Activated CD8-positive, alpha-beta memory T cell treated with anti-CD3 and anti-CD28 coated beads, Interleukin-2, amount 10 ng/mL, durations not matched to agents 7 days and 5 days (primary cell): ENCODE measurements at regions of chr20 and their contacts with region 1.

Region 1: DNA sequence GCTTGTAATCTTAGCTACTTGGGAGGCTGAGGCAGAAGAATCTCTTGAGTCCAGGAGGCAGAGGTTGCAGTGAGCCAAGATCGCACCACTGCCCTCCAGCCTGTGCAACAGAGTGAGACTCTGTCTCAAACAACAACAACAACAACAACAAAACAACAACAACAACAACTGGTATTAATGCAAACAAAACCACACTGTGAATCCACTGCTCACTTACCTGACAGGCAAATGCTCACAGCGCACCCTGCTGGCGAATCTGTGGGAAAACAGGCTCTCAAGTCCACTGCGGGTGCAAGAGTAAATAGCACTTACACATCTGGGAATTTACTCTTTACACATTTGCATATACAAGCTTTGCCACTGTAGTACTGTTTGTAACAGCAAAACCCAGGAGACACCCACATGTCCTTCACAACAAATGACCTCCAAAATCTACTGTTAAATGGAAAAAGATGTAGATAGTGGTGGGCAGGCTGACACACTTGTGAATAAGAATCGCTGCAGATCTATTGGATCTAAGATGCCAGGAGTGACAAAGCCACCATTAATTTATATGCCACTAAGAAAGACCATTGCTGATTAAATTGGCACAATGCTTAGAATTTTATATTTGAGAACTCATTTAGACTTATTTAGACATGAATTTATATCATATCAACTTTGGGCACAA is 29.3 kb downstream of the NSFL1C start:
- DNase-seq: peak; percentile 85
- ATAC-seq: peak; percentile 63
- H3K4me3 Mint-ChIP-seq: no peak overlapping the region
- H3K27ac Mint-ChIP-seq: no peak overlapping the region
- H3K4me1 Mint-ChIP-seq: peaks cover 28% of the 10 kb centered on the region
- H3K27me3 Mint-ChIP-seq: peaks cover 21% of the 10 kb centered on the region

Region 2: DNA sequence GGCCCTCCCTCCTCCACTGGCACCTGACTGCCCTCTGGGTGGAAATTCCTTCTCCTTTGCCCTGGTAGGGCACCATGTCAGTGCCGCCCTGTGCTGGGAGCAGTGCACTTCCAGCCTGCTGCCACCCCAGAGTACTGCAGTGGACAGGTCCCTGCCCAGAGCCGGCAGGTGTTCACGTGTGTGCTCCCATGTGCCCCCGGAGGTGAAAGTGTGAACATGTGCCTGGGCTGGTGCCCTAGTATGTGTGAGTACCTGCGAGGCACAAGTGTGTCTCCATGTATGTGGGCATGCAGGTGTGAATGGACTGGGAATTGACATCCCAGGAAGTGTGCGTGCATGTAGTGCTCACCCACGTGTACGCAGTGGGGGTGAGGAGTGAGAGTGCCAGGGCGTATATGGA is 137.8 kb before region 1 on chr20:
- CTCF ChIA-PET with region 1: interaction called, 11 read pairs
- DNase-seq: peak; percentile 58
- ATAC-seq: no peak
- H3K4me3 Mint-ChIP-seq: no peak overlapping the region
- H3K27ac Mint-ChIP-seq: no peak overlapping the region
- H3K4me1 Mint-ChIP-seq: peaks cover 26% of the 10 kb centered on the region
- H3K27me3 Mint-ChIP-seq: no peaks in the 10 kb centered on the region

Region 3: DNA sequence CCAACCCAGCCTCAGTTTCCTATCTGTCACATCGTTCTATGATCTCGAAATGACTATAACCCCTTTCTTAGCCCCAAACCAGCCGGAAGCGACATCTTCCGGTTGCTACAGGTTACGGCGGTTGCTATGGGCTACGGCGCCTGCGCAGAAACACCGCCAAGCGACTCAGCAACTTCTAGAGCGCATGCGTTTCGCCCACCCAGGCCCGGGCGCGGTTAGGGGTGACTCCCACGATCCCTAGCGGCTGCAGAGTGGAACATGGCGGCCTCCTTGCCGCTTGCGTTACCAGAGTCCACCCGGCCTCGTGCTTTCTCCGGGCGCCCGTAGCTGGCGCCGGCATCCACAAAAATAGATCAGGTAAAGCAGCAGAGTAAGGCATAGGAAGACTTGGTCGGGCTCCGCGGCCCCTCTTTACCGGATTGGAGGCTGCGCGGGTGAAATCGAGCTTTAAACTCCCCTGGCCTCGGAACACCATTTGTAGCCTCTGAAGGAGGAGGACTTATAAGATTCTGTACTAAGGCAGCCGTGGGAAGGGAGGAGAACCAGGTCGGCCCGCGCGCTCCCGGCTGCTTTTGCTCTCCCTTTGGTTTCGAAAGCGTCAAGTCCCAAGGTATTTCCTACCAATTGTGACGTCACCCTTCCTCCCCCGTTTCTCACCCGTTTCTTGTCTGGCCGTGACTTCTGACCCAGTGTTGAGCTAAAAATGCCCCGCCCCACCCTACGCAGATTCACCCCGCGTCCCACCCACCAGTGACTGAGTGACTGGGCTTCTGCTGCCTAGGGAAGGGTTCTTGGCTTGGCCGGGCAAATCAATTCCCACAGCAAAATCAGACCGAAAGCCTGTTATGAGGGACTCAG is 112.0 kb before region 1 on chr20:
- CTCF ChIA-PET with region 1: interaction called, 21 read pairs
- DNase-seq: peak; percentile 99
- ATAC-seq: peak; percentile 87
- H3K4me3 Mint-ChIP-seq: no peak overlapping the region
- H3K27ac Mint-ChIP-seq: no peak overlapping the region
- H3K4me1 Mint-ChIP-seq: peaks cover 19% of the 10 kb centered on the region
- H3K27me3 Mint-ChIP-seq: no peaks in the 10 kb centered on the region

Region 4: GRCh38 chr20:1423625-1424106 is 13.7 kb before region 1 on chr20:
- CTCF ChIA-PET with region 1: interaction called, 14 read pairs
- DNase-seq: no peak
- ATAC-seq: no peak
- H3K4me3 Mint-ChIP-seq: no peak overlapping the region
- H3K27ac Mint-ChIP-seq: no peak overlapping the region
- H3K4me1 Mint-ChIP-seq: peaks cover 22% of the 10 kb centered on the region
- H3K27me3 Mint-ChIP-seq: peaks cover 5% of the 10 kb centered on the region

Region 5: GRCh38 chr20:1503564-1504227 is 66.3 kb after region 1 on chr20:
- CTCF ChIA-PET with region 1: interaction called, 11 read pairs
- DNase-seq: peak; percentile 86
- ATAC-seq: peak; percentile 99
- H3K4me3 Mint-ChIP-seq: no peak overlapping the region
- H3K27ac Mint-ChIP-seq: no peak overlapping the region
- H3K4me1 Mint-ChIP-seq: peaks cover 4% of the 10 kb centered on the region
- H3K27me3 Mint-ChIP-seq: peaks cover 75% of the 10 kb centered on the region